ENCODE measurements at regions of chr7 and their contacts with region 1.

Region 1: DNA sequence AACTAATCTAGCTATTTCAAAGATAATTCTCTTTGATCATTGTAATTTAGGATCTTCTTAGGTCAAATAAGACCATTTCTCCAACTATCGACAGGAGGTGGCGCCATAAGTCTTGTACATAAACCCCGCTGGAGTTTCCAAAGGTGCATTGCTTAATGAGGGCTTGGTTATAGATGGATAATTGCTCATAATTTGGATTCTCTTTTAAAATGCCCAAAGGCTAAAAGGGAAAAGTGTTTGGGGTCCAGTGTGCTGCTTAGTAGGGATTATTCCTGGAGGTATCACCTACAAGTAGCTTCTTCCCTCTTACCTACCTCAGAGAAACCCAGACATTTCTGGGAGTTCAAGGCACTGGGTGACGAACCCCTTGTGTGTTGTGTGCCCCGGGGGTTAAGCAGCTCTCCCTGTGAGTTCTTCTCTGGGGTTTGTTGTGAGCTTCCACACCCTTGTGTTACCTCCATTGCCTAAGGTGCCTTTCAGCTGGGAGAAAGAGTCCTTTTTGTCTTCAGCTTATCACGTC is 75.2 kb downstream of the PAXIP1 start:
- DNase-seq: peak; percentile 67
- H3K4me3 ChIP-seq: peak overlapping the region; percentile 57
- CTCF ChIP-seq: peak; percentile 56

Region 2: GRCh38 chr7:154777023-154777422 is 150.7 kb before region 1 on chr7:
- CTCF ChIA-PET with region 1: no interaction called
- POLR2A ChIA-PET with region 1: no interaction called
- DNase-seq: no peak
- H3K4me3 ChIP-seq: no peak overlapping the region
- CTCF ChIP-seq: no peak

Region 3: GRCh38 chr7:154913638-154914312 is 13.9 kb before region 1 on chr7:
- CTCF ChIA-PET with region 1: interaction called, 73 read pairs
- POLR2A ChIA-PET with region 1: no interaction called
- DNase-seq: no peak
- H3K4me3 ChIP-seq: peak overlapping the region; percentile 32
- CTCF ChIP-seq: peak; percentile 92

Region 4: DNA sequence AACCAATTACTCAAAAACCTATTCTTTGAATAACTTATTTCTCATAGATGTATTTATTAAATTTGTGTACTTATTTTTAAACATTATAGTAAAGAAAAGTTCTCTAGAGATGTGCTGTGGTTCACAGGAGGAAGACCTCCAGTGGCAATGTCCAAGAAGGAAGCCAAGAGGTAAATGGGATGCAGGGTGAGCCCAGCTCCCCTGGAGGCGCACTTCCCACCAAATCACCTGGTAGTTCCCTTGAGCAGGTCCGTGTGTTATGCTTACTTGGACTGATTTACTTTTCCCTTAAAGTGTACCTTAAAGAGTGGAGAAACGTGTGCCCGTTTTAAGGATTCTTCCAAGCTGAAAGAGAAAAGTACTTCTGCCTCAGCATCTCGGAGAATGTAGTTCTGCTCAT is 19.9 kb after region 1 on chr7:
- CTCF ChIA-PET with region 1: interaction called, 38 read pairs
- POLR2A ChIA-PET with region 1: no interaction called
- DNase-seq: no peak
- H3K4me3 ChIP-seq: no peak overlapping the region
- CTCF ChIP-seq: no peak

Region 5: DNA sequence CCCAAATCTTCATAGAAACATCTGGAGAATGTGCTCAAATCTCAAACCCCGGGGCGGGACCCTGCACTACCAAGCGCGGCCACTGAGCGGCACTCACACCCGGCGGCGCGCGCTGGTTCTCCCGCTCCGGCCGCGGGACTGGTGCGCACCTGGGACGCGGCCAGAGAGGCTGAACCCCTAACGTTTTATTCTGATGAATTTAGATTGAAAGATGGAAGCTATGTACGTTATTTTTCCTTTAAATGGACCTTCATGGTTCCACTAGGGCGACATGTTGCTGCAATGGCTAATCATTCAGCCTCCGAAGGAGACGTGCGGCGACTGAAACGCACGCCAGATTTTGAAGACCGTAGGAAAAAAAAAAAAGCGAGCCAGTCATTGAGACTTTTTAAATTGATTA is 263.0 kb after region 1 on chr7:
- CTCF ChIA-PET with region 1: interaction called, 17 read pairs
- POLR2A ChIA-PET with region 1: no interaction called
- DNase-seq: no peak
- H3K4me3 ChIP-seq: peak overlapping the region; percentile 43
- CTCF ChIP-seq: peak; percentile 94

Region 6: GRCh38 chr7:155380221-155380861 is 452.7 kb after region 1 on chr7:
- CTCF ChIA-PET with region 1: interaction called, 17 read pairs
- POLR2A ChIA-PET with region 1: no interaction called
- DNase-seq: no peak
- H3K4me3 ChIP-seq: no peak overlapping the region
- CTCF ChIP-seq: peak; percentile 81

Region 7: DNA sequence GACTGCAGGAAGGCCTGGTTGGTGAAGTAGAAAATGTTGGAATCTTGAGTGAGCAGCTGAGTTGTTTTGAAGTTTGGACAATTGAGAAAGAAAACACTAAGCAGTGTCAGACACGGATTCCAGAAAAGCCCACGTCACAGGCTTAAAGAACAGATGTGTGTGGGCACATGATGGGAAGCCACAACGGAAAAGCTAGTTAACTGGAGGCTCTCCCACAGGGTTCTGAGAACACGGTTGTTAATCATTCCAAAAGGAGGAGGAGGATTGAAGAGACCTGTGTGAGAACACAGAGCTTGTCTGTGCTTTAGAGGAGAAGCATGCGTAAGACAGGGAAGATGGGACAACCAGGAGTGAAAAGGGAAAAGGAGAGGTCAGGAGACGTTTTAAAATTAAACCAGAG is 842.0 kb after region 1 on chr7:
- CTCF ChIA-PET with region 1: interaction called, 30 read pairs
- POLR2A ChIA-PET with region 1: no interaction called
- DNase-seq: peak; percentile 73
- H3K4me3 ChIP-seq: no peak overlapping the region
- CTCF ChIP-seq: no peak

Measured in AG04449 (cell line).